ENCODE measurements at regions of chr21 and their contacts with region 1.

Region 1: GRCh38 chr21:42233067-42233961 is 14.4 kb downstream of the ABCG1 start:
- DNase-seq: peak; percentile 66
- H3K4me3 ChIP-seq: no peak overlapping the region
- H3K27ac ChIP-seq: peak overlapping the region in 1 of 2 experiments; percentile 89; a peak in 2 of 4 replicates
- H3K4me1 ChIP-seq: peaks cover 8 to 48% of the 10 kb centered on the region in 2 experiments; a peak in 3 of 4 replicates
- H3K27me3 ChIP-seq: peaks cover 6% of the 10 kb centered on the region; the same call in 1 of the 2 replicates
- CTCF ChIP-seq: no peak
- EP300 ChIP-seq: no peak
- RAD21 ChIP-seq: no peak

Region 2: DNA sequence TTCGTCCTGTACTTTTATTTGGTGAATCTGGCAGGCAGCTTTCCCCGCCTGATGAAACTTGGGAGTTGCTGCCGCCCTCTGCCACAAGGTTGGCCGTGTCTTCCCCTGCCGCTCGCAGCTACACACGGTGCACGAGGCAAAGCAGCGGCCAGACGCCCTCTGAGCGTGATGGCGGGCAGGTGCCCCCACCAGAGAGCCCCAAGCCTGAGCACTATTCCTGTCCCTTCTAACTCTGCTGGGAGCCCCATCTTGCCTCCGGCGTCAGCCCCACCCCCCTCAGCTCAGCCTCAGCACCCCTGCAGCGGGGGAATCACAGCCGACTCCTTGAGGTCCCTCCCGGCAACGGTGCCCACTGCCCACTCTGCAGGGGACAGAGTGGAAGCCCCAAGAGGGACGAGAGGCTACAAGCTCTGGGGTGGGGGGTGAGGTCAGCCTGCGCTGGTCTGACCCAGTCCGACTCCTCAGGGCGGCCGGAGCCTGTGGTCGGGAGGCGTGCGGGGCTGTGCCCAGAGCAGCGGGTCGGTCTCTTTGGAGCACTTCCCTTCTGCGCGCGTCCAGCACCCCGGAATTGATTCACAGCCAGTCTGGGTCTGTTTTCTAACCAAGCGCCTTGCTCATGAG is 507.8 kb before region 1 on chr21:
- CTCF ChIA-PET with region 1: no interaction called
- POLR2A ChIA-PET with region 1: no interaction called
- DNase-seq: no peak
- H3K4me3 ChIP-seq: no peak overlapping the region
- H3K27ac ChIP-seq: no peak overlapping the region
- H3K4me1 ChIP-seq: peaks cover 3 to 9% of the 10 kb centered on the region in 2 experiments; a peak in 3 of 4 replicates
- H3K27me3 ChIP-seq: no peaks in the 10 kb centered on the region
- CTCF ChIP-seq: no peak
- EP300 ChIP-seq: no peak
- RAD21 ChIP-seq: no peak

Region 3: DNA sequence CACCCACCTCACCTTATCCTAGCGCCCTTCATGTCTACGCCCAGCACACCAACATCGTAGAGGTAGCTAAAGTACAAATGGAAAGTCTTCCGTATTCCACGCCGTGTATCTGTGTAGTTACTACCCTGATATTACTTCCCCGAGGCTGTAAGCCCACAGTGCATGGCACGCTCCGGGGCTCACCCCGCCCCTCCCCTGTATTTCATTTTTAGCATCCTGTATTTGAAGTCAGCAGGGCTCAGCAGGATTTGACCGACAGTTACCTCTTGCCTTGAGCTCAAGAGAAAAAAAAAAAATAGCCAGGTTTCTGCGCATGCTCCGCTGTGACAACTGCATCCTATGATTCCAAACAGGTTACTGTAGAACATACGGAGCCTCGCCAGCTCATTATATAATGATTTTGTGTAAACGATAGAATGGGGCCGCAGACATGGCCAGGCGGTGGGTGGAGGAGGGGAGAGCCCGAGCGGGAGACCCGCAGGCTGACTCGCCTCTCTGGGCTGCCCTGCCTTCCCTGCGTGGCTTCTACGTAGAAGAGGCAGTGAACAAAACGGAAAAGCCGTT is 13.1 kb before region 1 on chr21:
- CTCF ChIA-PET with region 1: interaction called, 11 read pairs
- POLR2A ChIA-PET with region 1: interaction called, 28 read pairs
- DNase-seq: peak; percentile 79
- H3K4me3 ChIP-seq: peak overlapping the region; percentile 55 to 58; a peak in 3 of 4 replicates
- H3K27ac ChIP-seq: peak overlapping the region in 1 of 2 experiments; percentile 79; a peak in 2 of 4 replicates
- H3K4me1 ChIP-seq: peaks cover 0 to 34% of the 10 kb centered on the region in 2 experiments; a peak in 2 of 4 replicates
- H3K27me3 ChIP-seq: peaks cover 11% of the 10 kb centered on the region; the same call in 1 of the 2 replicates
- CTCF ChIP-seq: no peak
- EP300 ChIP-seq: no peak
- RAD21 ChIP-seq: no peak

Measured in SK-N-SH (cell line).